Colonic mucosa (tissue), 4 donors: ENCODE measurements at regions of chr12 and their contacts with region 1.

Region 1: DNA sequence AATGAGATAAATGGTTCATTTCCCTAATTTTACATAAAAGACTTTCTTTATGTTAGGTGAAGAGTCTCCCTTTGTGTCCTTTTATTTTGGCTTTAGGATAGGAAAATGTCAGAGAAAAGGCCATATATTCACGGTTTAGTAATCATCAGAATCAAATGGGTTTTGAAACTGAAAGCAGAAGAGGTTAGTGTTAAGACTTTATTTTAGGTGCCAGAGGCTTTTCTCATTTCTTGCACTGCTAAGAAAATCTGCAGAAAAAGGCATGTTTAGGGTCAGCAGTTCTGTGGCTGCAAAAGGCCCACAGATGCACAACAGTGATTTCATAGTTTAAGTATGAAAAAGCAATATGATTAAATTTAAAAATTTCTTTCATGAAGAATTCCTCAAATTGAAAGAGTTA is 80.4 kb upstream of the SINHCAF start:
- DNase-seq: no peak
- H3K4me3 ChIP-seq: no peak overlapping the region
- H3K27ac ChIP-seq: no peak overlapping the region
- H3K4me1 ChIP-seq: no peaks in the 10 kb centered on the region
- H3K27me3 ChIP-seq: no peaks in the 10 kb centered on the region
- CTCF ChIP-seq: no peak

Region 2: DNA sequence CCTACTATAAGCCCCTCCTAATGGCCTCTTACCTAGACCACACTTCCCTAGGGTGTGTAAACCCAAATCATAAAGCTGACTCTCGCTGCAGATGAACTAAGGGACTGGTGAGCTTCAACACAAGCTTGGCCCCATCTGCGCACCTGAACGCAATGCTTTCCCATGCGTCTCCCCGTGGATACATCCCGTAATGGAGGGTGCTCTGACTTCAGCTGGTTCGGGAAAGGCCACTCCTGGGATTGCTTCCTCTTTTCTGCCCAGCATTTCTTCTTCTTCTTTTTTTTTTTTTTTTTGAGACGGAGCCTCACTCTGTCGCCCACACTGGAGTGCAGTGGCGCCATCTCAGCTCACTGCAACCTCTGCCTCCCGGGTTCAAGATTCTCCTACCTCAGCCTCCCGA is 225.4 kb after region 1 on chr12:
- intact Hi-C with region 1: loop called (anchors 2 kb)
- DNase-seq: no peak
- H3K4me3 ChIP-seq: no peak overlapping the region
- H3K27ac ChIP-seq: no peak overlapping the region
- H3K4me1 ChIP-seq: no peaks in the 10 kb centered on the region
- H3K27me3 ChIP-seq: no peaks in the 10 kb centered on the region
- CTCF ChIP-seq: no peak